H1 (cell line): ENCODE measurements at regions of chr10 and their contacts with region 1.

Region 1: DNA sequence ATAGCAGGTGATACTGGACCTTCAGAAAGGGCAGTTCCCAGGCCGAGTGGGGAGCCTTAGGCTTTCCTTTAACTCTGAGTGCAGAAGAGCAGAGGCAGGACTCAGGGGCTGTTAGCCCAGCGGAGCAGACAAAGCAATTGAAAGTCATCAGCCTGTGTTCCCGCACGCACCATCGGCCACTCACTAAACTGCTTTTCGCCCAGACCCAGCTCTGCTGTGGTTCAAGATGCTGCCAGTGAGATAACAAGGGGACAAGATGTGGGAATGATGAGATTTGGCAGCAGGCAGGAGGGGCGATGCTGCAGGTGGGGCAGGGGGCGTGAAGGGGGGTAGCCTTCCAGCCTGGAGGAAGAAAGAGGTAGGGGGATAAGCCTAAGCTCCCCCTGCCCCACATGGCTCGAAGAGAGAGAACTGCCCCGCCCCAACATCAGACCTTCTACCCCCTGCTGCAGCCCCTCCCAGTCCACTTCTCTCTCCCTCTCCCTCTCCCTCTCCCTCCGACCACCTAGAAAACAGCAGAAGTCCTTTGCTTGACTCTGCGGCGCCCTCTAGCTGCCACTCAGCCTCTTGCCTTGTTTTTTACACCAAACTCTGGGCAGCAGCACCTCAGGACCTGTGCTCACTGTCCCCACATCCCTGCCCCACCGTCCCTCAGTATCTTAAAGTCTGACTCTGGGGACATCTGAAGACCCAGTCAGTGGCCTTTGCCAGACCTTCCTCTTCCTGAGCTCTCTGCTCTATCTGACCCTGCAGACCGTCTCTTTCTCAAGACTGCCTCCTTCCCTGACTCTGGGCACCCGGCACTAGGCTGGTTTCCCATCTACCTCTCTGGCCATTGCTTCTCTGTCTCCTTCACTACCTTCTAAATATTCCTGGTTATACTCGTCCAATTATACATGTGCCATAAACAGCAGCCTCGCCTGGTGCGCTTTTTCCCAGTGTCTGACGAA is 110.5 kb downstream of the C10orf105 start:
- DNase-seq: peak; percentile 67 to 92
- H3K4me3 ChIP-seq: no peak overlapping the region
- H3K27ac ChIP-seq: no peak overlapping the region
- H3K4me1 ChIP-seq: peaks cover 6 to 18% (median 17%) of the 10 kb centered on the region in 4 experiments
- H3K27me3 ChIP-seq: no peaks in the 10 kb centered on the region
- CTCF ChIP-seq: peak; percentile 85 to 95 (median 91)
- EP300 ChIP-seq: no peak
- POLR2A ChIP-seq: no peak
- RAD21 ChIP-seq: peak; percentile 85 to 90

Region 2: GRCh38 chr10:71383972-71384687 is 225.0 kb before region 1 on chr10:
- CTCF ChIA-PET with region 1: interaction called, 30 read pairs
- POLR2A ChIA-PET with region 1: no interaction called
- DNase-seq: peak; percentile 58 to 99
- H3K4me3 ChIP-seq: no peak overlapping the region
- H3K27ac ChIP-seq: no peak overlapping the region
- H3K4me1 ChIP-seq: no peaks in the 10 kb centered on the region
- H3K27me3 ChIP-seq: no peaks in the 10 kb centered on the region
- CTCF ChIP-seq: peak; percentile 93 to 96 (median 95)
- EP300 ChIP-seq: no peak
- POLR2A ChIP-seq: no peak
- RAD21 ChIP-seq: peak; percentile 91 to 92

Region 3: DNA sequence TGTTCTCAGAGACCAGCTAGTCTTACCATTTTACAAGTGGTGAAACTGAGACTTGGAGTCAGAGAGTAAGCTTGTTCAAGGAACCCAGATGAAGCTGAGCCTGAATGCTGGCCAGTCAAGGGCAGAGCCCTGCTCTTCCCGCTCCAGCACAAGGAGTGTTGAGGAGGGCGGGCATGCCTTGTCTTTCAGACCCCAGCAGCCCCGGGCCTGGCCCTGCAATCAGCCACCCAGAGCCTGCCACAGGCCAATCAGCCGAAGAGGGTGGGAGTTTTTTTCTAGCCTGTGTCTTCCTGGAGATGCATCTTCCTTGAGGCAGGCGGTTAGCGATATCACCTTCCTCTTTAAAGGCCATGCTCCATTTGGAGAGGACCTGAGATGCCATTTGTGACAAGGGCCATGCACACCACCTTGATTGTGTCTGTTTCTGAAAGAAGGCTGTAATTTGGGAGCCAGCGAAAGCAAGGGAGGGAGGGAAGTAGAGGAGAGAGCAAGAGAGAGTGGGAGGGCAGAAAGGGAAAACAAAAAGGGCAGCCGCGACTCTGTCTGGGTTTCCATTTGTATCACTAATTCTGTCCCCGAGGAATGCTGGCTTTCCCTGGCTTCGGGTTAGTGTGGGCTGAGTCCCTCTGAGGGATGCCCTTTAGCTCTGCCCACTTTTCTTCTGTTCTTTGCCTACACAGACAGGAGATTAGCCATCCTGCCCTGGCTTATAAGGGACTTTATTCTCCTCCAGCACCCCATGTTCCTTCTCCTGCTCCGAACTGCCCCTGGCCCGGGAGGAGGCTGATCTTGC is 204.4 kb before region 1 on chr10:
- CTCF ChIA-PET with region 1: no interaction called
- POLR2A ChIA-PET with region 1: no interaction called
- DNase-seq: peak in 1 of 2 experiments; percentile 46
- H3K4me3 ChIP-seq: no peak overlapping the region
- H3K27ac ChIP-seq: no peak overlapping the region
- H3K4me1 ChIP-seq: peaks cover 3 to 4% (median 3%) of the 10 kb centered on the region in 4 experiments; a peak in 4 of 7 replicates
- H3K27me3 ChIP-seq: peaks cover 0 to 4% (median 4%) of the 10 kb centered on the region in 4 experiments; a peak in 3 of 7 replicates
- CTCF ChIP-seq: no peak
- EP300 ChIP-seq: no peak
- POLR2A ChIP-seq: no peak
- RAD21 ChIP-seq: no peak

Region 4: GRCh38 chr10:71494980-71495381 is 114.1 kb before region 1 on chr10:
- CTCF ChIA-PET with region 1: interaction called, 10 read pairs
- POLR2A ChIA-PET with region 1: no interaction called
- DNase-seq: no peak
- H3K4me3 ChIP-seq: no peak overlapping the region
- H3K27ac ChIP-seq: no peak overlapping the region
- H3K4me1 ChIP-seq: peaks cover 0 to 4% (median 1%) of the 10 kb centered on the region in 4 experiments; a peak in 1 of 7 replicates
- H3K27me3 ChIP-seq: peaks cover 0 to 33% (median 23%) of the 10 kb centered on the region in 4 experiments; a peak in 6 of 7 replicates
- CTCF ChIP-seq: no peak
- EP300 ChIP-seq: no peak
- POLR2A ChIP-seq: no peak
- RAD21 ChIP-seq: no peak

Region 5: DNA sequence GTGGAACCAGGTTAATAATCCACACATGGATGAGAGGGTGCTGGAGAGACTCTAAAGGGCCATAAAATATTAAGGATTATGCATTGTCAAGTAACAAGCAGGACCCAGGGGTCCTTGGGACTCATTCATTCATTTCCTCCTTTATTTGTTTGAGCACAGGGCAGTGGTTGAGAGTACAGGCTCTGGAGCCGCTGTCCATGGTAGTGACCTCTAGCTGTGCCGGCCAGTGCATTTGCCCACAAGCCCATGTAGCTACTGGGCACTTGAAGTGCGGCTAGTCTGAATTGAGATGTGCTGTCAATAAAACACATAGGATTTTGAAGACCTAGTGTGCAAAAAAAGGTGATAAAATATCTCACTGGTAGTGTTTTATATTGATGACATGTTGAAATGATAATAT is 27.1 kb before region 1 on chr10:
- CTCF ChIA-PET with region 1: interaction called, 56 read pairs
- POLR2A ChIA-PET with region 1: no interaction called
- DNase-seq: no peak
- H3K4me3 ChIP-seq: no peak overlapping the region
- H3K27ac ChIP-seq: no peak overlapping the region
- H3K4me1 ChIP-seq: peaks cover 0 to 6% (median 3%) of the 10 kb centered on the region in 4 experiments; a peak in 2 of 7 replicates
- H3K27me3 ChIP-seq: no peaks in the 10 kb centered on the region
- CTCF ChIP-seq: no peak
- EP300 ChIP-seq: no peak
- POLR2A ChIP-seq: no peak
- RAD21 ChIP-seq: no peak

Region 6: GRCh38 chr10:71638064-71638821 is 29.1 kb after region 1 on chr10:
- CTCF ChIA-PET with region 1: interaction called, 169 read pairs
- POLR2A ChIA-PET with region 1: no interaction called
- DNase-seq: no peak
- H3K4me3 ChIP-seq: no peak overlapping the region
- H3K27ac ChIP-seq: no peak overlapping the region
- H3K4me1 ChIP-seq: peaks cover 5 to 44% (median 34%) of the 10 kb centered on the region in 4 experiments
- H3K27me3 ChIP-seq: peaks cover 0 to 20% (median 12%) of the 10 kb centered on the region in 4 experiments; a peak in 5 of 7 replicates
- CTCF ChIP-seq: no peak
- EP300 ChIP-seq: no peak
- POLR2A ChIP-seq: no peak
- RAD21 ChIP-seq: no peak